MCF 10A (cell line): ENCODE measurements at regions of chr21 and their contacts with region 1.

Region 1: GRCh38 chr21:41678944-41679343 is 87.9 kb downstream of the RIPK4 start:
- DNase-seq: peak; percentile 100
- H3K4me3 Mint-ChIP-seq: peak overlapping the region; percentile 60
- H3K27ac Mint-ChIP-seq: peak overlapping the region; percentile 87
- H3K4me1 Mint-ChIP-seq: peaks cover 36% of the 10 kb centered on the region
- H3K27me3 Mint-ChIP-seq: no peaks in the 10 kb centered on the region
- CTCF ChIP-seq: no peak

Region 2: GRCh38 chr21:41648591-41649031 is 30.3 kb before region 1 on chr21:
- CTCF ChIA-PET with region 1: interaction called, 4 read pairs
- POLR2A ChIA-PET with region 1: interaction called, 34 read pairs
- intact Hi-C with region 1: no loop called
- DNase-seq: peak; percentile 80
- H3K4me3 Mint-ChIP-seq: no peak overlapping the region
- H3K27ac Mint-ChIP-seq: no peak overlapping the region
- H3K4me1 Mint-ChIP-seq: peaks cover 33% of the 10 kb centered on the region
- H3K27me3 Mint-ChIP-seq: no peaks in the 10 kb centered on the region
- CTCF ChIP-seq: no peak

Region 3: DNA sequence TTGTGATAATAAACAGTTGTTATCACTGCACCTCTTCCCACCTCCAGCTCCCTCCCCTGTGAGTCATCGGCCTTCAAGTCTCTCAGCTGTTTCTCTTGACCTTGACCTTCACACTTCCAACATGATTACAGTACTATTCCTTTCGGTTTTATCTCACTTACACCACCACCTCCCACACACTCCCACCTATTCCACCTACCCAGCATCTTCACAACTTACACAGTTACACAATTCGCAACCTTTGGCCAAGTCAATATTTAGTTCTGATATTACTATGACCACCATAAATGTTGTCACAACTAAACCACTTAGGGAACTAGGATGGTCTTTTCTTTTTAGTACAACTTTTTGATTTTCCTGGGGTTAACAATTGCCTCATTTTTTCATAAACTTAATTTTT is 27.7 kb after region 1 on chr21:
- CTCF ChIA-PET with region 1: interaction called, 3 read pairs
- POLR2A ChIA-PET with region 1: interaction called, 27 read pairs
- intact Hi-C with region 1: no loop called
- DNase-seq: peak; percentile 58
- H3K4me3 Mint-ChIP-seq: no peak overlapping the region
- H3K27ac Mint-ChIP-seq: no peak overlapping the region
- H3K4me1 Mint-ChIP-seq: peaks cover 21% of the 10 kb centered on the region
- H3K27me3 Mint-ChIP-seq: no peaks in the 10 kb centered on the region
- CTCF ChIP-seq: no peak

Region 4: GRCh38 chr21:41726945-41727783 is 48.2 kb after region 1 on chr21:
- CTCF ChIA-PET with region 1: interaction called, 3 read pairs
- POLR2A ChIA-PET with region 1: interaction called, 13 read pairs
- intact Hi-C with region 1: loop called (anchors 2 kb)
- DNase-seq: peak; percentile 92
- H3K4me3 Mint-ChIP-seq: peak overlapping the region; percentile 55
- H3K27ac Mint-ChIP-seq: peak overlapping the region; percentile 84
- H3K4me1 Mint-ChIP-seq: peaks cover 25% of the 10 kb centered on the region
- H3K27me3 Mint-ChIP-seq: no peaks in the 10 kb centered on the region
- CTCF ChIP-seq: no peak

Region 5: DNA sequence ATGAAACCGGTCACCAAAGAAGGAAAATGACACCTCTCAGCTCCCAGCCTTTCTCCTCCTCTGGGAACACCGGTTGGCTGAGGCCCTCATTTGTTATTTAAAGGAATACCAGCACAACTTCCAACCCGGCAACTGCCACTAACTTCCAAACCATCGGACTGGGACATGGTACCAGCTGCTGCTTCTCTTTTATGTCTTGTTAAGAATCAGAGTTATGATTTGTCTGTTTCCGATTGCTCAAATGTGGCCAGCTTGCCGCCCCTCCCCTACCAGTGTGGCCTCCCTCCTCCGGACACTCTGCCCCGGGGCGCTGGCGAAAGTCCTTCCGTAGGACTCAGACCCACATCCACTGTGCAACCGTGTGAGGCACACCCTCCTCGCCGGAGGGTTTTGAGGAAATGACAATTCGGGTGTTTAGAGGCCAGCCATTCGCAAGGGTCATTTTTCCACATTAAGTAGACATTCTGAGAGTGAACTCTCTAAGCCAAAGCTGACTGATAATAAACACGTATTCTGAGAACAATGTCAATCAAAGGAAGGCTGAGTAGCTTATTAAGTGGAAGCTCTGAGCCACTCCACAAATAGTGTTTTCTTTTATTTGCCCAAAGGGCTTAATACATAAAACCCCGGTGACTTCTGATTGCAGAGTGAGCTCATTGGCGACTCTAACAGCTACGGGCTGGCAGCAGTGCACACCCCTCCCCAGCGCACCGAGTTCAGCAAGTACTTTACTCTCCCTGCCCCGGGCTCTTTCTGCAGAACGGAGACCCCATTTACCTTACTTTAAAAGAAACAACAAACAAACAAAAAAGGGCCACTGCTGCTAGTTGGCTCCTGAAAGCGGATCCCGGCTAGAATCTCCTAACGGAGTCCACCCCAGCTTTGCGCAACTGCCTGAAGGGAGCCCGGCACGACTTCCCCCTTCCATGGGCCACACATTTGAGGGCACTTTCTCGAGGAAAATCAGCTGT is 82.6 kb after region 1 on chr21:
- CTCF ChIA-PET with region 1: interaction called, 11 read pairs
- POLR2A ChIA-PET with region 1: interaction called, 131 read pairs
- intact Hi-C with region 1: loop called (anchors 2 kb)
- DNase-seq: peak; percentile 86
- H3K4me3 Mint-ChIP-seq: peak overlapping the region; percentile 87
- H3K27ac Mint-ChIP-seq: peak overlapping the region; percentile 62
- H3K4me1 Mint-ChIP-seq: peaks cover 53% of the 10 kb centered on the region
- H3K27me3 Mint-ChIP-seq: no peaks in the 10 kb centered on the region
- CTCF ChIP-seq: no peak

Region 6: DNA sequence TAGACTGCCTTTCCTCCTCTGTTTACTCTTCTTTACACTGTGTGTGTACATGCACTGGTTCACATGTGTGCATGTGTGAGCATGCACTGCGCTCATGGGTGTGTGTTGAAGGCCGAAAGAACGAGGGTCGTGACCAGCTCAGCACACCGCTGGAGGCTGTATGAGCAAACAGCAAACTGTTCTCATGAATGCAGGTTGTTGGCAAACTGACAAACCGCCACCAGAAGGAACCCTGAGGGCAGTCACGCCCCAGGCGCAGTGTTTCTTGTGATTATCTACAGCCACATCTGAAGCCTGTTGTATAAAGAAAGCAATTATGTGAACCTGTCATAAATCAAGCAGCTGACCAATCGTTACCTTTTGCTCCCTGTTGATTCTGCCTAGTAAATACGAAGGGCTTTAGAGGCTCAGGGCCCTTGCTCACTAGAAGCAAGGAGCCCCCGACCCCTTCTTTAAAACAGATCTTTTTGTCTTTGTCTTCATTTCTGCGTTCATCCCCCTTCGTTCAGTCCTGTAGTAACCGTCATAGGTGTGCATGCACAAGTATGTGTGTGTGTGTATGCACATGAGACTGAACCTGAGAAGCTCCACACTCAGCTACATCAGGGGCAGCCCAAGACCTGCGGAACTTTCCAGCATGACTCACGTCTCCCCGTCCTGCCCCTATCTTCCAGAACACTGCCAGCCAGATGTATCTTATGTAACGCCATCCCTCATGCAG is 104.7 kb after region 1 on chr21:
- CTCF ChIA-PET with region 1: interaction called, 7 read pairs
- POLR2A ChIA-PET with region 1: interaction called, 12 read pairs
- intact Hi-C with region 1: no loop called
- DNase-seq: peak; percentile 93
- H3K4me3 Mint-ChIP-seq: peak overlapping the region; percentile 7
- H3K27ac Mint-ChIP-seq: no peak overlapping the region
- H3K4me1 Mint-ChIP-seq: peaks cover 29% of the 10 kb centered on the region
- H3K27me3 Mint-ChIP-seq: no peaks in the 10 kb centered on the region
- CTCF ChIP-seq: no peak

Region 7: DNA sequence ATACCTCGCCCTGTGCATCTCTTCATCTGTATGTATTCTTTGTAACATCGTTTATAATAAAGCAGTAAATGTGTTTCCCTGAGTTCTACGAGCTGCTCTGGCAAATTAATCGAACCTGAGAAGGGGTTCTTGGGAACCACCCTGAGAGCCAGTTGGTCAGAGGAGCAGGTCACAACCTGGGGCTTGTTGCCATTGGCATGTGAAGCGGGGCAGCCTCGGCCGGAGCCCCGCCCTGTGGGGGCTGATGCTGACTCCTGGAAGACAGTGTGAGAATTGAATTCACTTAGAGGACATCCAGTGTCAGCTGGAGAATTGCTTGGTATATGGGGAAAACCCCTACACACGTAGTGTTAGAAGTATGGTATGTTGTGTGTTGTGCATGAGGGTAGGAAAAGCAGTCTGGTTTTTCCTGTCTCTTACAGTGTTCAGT is 846.2 kb after region 1 on chr21:
- CTCF ChIA-PET with region 1: no interaction called
- POLR2A ChIA-PET with region 1: no interaction called
- intact Hi-C with region 1: no loop called
- DNase-seq: no peak
- H3K4me3 Mint-ChIP-seq: no peak overlapping the region
- H3K27ac Mint-ChIP-seq: no peak overlapping the region
- H3K4me1 Mint-ChIP-seq: no peaks in the 10 kb centered on the region
- H3K27me3 Mint-ChIP-seq: no peaks in the 10 kb centered on the region
- CTCF ChIP-seq: no peak